Activated CD4-positive, alpha-beta T cell treated with anti-CD3 and anti-CD28 coated beads for 36 hours (primary cell): ENCODE measurements at regions of chr10 and their contacts with region 1.

Region 1: GRCh38 chr10:44993931-44994747 is 6.6 kb upstream of the ZNF22 start:
- DNase-seq: no peak
- ATAC-seq: no peak
- H3K4me3 Mint-ChIP-seq: no peak overlapping the region
- H3K27ac Mint-ChIP-seq: no peak overlapping the region
- H3K4me1 Mint-ChIP-seq: peaks cover 14% of the 10 kb centered on the region
- H3K27me3 Mint-ChIP-seq: no peaks in the 10 kb centered on the region

Region 2: DNA sequence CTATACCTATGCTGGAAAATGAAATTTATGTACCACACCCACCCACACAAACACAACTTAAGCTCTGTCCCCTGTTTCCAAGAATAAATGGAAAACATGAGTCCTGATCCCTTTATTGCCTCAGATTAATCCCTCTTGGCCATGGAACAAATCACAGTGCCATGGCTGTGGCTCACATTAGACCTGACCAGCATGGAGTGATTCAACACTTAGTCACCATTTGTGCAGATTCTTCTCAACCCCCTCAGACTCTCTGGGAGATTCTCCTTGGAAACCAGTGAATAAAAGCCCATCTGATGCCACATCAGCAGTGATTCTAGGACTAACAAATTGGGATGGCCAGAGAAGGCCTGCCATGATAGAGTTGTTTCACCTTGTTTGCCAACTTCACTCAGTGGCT is 287.4 kb before region 1 on chr10:
- CTCF ChIA-PET with region 1: no interaction called
- POLR2A ChIA-PET with region 1: no interaction called
- intact Hi-C with region 1: no loop called
- DNase-seq: no peak
- ATAC-seq: no peak
- H3K4me3 Mint-ChIP-seq: no peak overlapping the region
- H3K27ac Mint-ChIP-seq: no peak overlapping the region
- H3K4me1 Mint-ChIP-seq: no peaks in the 10 kb centered on the region
- H3K27me3 Mint-ChIP-seq: no peaks in the 10 kb centered on the region

Region 3: DNA sequence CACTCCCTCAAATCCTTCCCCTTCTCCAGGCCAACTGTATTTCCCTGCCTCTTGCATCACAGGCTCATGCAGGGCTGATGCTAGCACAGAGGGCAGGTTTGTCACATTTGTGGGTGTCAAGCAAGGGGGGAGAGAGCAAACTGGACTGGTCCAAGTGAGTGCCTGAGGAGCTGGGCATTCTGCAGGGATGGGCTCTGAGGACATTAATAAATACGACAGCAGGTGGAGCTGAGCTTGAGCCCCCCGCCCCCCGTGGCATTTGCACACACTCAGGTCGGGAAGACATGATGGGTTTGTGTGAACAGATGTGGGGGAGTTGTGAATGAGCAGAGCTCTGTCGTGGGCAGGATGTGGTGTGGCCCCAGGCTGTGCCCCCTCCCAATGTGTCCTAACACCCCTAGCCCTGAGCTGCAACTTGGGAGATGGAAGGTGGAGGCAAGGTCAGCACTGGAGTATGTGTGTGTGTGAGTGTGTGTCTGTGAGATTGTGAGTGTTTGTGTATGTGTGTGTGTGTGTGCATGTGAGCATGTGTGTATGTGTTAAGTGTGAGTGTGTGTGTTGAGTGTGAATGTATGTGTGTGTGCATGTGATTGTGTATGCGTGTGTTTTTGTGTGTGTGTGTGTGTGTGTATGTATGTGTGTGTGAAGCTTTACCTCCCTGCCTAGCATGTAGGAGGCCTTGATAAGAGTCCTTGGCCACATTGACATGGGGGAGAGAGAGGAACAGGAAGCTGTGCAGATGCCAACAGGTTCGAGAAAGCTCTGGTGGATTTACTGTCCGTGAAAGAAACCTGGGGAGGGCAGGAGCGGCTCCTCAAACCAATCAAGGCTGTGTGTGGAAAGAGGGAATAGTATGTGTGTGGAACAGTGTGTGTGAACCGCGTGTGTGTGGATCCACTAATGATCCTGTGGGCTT is 25.4 kb before region 1 on chr10:
- CTCF ChIA-PET with region 1: interaction called, 4 read pairs
- POLR2A ChIA-PET with region 1: interaction called, 17 read pairs
- intact Hi-C with region 1: no loop called
- DNase-seq: peak; percentile 45
- ATAC-seq: peak; percentile 45
- H3K4me3 Mint-ChIP-seq: no peak overlapping the region
- H3K27ac Mint-ChIP-seq: peak overlapping the region; percentile 38
- H3K4me1 Mint-ChIP-seq: peaks cover 35% of the 10 kb centered on the region
- H3K27me3 Mint-ChIP-seq: no peaks in the 10 kb centered on the region